ENCODE measurements at regions of chr19 and their contacts with region 1.

Region 1: GRCh38 chr19:49118565-49119410 is at the start of gene C19orf73:
- DNase-seq: peak; percentile 95
- ATAC-seq: peak; percentile 89
- H3K4me3 Mint-ChIP-seq: peak within 1 kb of the TSS; percentile 88
- H3K27ac Mint-ChIP-seq: peak within 1 kb of the TSS; percentile 91
- H3K4me1 Mint-ChIP-seq: peaks cover 28% of the 10 kb centered on the region
- H3K27me3 Mint-ChIP-seq: peaks cover 10% of the 10 kb centered on the region
- CTCF ChIP-seq: no peak
- total RNA-seq, gene C19orf73: 1.5 to 2.0 TPM

Region 2: GRCh38 chr19:48965806-48966540 is 152.8 kb before region 1 on chr19:
- CTCF ChIA-PET with region 1: no interaction called
- POLR2A ChIA-PET with region 1: no interaction called
- intact Hi-C with region 1: no loop called
- DNase-seq: peak; percentile 96
- ATAC-seq: peak; percentile 41
- H3K4me3 Mint-ChIP-seq: peak overlapping the region; percentile 98
- H3K27ac Mint-ChIP-seq: peak overlapping the region; percentile 100
- H3K4me1 Mint-ChIP-seq: peaks cover 52% of the 10 kb centered on the region
- H3K27me3 Mint-ChIP-seq: no peaks in the 10 kb centered on the region
- CTCF ChIP-seq: no peak

Region 3: GRCh38 chr19:49085020-49085867 is 33.5 kb before region 1 on chr19 and contains the start of gene SNRNP70:
- CTCF ChIA-PET with region 1: interaction called, 11 read pairs
- POLR2A ChIA-PET with region 1: interaction called, 9 read pairs
- intact Hi-C with region 1: no loop called
- DNase-seq: peak; percentile 99
- ATAC-seq: peak; percentile 98
- H3K4me3 Mint-ChIP-seq: peak within 1 kb of the TSS; percentile 99
- H3K27ac Mint-ChIP-seq: peak within 1 kb of the TSS; percentile 94
- H3K4me1 Mint-ChIP-seq: peaks cover 33% of the 10 kb centered on the region
- H3K27me3 Mint-ChIP-seq: no peaks in the 10 kb centered on the region
- CTCF ChIP-seq: no peak
- total RNA-seq, gene SNRNP70: 187 to 188 TPM

Region 4: DNA sequence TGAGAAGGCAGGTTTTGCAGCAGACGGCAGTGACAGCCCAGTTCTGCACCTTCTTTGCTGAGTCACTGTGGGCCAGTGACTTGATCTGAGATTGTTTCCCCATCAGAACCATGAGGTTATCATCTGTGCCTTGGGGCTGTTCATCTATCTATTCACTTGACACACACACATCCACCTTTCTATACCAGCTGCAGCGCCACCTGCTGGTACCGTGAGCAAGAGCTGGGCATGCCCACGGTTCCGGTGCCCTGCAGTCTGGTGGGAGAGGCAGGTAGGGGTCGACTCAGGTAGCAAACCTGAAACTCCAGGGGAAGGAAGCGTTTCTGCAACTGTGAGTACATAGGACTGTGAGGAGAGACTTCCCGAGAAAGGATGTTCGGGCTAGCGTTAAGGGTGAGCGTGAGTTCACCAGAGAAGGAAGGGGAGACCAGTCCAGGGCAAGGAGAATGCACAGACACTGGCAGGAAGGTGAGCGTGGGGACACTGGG is 12.1 kb before region 1 on chr19:
- CTCF ChIA-PET with region 1: interaction called, 41 read pairs
- POLR2A ChIA-PET with region 1: interaction called, 14 read pairs
- intact Hi-C with region 1: no loop called
- DNase-seq: peak; percentile 77
- ATAC-seq: peak; percentile 68
- H3K4me3 Mint-ChIP-seq: no peak overlapping the region
- H3K27ac Mint-ChIP-seq: peak overlapping the region; percentile 26
- H3K4me1 Mint-ChIP-seq: peaks cover 7% of the 10 kb centered on the region
- H3K27me3 Mint-ChIP-seq: no peaks in the 10 kb centered on the region
- CTCF ChIP-seq: peak; percentile 91

Region 5: DNA sequence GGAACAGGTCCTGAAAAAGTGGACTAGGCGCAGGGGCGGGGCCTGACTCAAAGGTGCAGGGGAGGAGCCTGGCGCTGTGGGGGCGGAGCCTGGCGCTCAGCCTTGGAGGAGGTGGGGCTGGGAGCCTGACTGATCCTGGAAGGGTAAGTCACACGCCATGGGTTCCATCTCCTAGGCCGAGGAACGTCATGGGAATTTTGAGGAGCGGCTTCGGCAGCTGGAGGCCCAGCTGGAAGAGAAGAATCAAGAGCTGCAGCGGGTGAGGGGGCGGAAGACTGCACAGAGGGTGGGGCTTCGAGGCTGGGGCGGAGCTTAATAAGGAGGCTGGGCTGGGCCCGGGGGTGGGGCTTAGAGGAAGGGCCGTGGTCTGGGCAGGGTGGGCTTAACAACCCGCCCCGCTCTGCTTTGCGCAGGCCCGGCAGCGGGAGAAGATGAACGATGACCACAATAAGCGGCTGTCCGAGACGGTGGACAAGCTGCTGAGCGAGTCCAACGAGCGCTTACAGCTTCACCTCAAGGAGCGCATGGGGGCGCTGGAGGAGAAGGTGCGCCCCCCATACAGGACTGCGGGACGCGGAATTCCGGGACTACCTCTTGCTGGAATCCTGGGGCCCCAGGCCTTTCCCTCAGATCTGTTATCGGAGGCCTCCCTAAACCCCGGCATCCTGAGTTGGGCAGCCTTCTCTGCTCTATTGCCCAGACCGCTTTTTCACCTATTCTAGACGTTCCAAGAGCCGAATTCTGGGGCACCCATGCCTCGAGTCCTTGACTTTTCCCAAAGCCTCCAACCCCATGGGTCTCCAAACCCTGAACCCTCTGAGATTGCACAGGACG is 15.1 kb after region 1 on chr19:
- CTCF ChIA-PET with region 1: interaction called, 11 read pairs
- POLR2A ChIA-PET with region 1: interaction called, 11 read pairs
- intact Hi-C with region 1: no loop called
- DNase-seq: peak; percentile 73
- ATAC-seq: peak; percentile 78
- H3K4me3 Mint-ChIP-seq: peak overlapping the region; percentile 49
- H3K27ac Mint-ChIP-seq: no peak overlapping the region
- H3K4me1 Mint-ChIP-seq: peaks cover 11% of the 10 kb centered on the region
- H3K27me3 Mint-ChIP-seq: peaks cover 4% of the 10 kb centered on the region
- CTCF ChIP-seq: no peak

Region 6: DNA sequence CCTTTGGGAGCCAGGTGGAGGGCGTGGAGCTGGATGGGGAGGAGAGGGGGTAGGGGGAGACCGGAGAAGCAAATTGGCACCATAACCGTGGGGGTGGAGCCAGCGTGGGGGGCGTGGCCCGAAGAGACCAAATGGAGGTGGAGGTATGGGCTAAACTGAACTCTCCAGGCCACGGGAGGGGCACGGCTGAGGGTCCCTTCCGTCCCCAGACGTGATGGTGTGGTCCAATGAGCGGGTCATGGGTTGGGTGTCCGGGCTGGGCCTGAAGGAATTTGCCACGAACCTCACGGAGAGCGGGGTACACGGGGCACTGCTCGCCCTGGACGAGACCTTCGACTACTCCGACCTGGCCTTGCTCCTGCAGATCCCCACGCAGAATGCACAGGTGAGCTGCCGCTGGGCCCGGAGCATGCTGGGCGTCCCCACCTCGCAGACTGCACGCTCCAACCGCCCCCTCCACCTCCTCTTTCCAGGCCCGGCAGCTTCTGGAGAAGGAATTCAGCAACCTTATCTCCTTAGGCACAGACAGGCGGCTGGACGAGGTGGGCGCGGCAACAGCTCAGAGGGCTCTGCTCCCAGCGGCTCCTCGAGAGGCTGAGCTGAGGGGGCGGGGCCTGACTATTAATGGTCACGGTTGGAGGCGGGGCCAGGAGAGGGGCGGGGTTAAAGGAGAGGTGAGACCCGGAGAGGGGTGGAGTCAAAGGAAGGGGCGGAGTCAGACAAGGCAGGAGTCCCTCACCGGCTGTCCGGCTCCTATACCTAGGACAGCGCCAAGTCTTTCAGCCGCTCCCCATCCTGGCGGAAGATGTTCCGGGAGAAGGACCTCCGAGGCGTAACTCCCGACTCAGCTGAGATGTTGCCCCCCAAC is 30.2 kb after region 1 on chr19:
- CTCF ChIA-PET with region 1: interaction called, 10 read pairs
- POLR2A ChIA-PET with region 1: no interaction called
- intact Hi-C with region 1: no loop called
- DNase-seq: peak; percentile 95
- ATAC-seq: peak; percentile 68
- H3K4me3 Mint-ChIP-seq: peak overlapping the region; percentile 62
- H3K27ac Mint-ChIP-seq: no peak overlapping the region
- H3K4me1 Mint-ChIP-seq: peaks cover 27% of the 10 kb centered on the region
- H3K27me3 Mint-ChIP-seq: peaks cover 63% of the 10 kb centered on the region
- CTCF ChIP-seq: no peak

Measured in activated CD8-positive, alpha-beta T cell treated with anti-CD3 and anti-CD28 coated beads for 36 hours (primary cell).